H1 (cell line): ENCODE measurements at regions of chr19 and their contacts with region 1.

Region 1: GRCh38 chr19:34364830-34365462 is at the start of gene GPI:
- DNase-seq: peak; percentile 15 to 83
- H3K4me3 ChIP-seq: peak within 1 kb of the TSS; percentile 79 to 99 (median 88)
- H3K27ac ChIP-seq: 0 out of 2 replicates have a peak within 1 kb of the TSS, but pooled peaks have one; percentile 8
- H3K4me1 ChIP-seq: peaks cover 3 to 12% (median 6%) of the 10 kb centered on the region in 4 experiments; a peak in 6 of 7 replicates
- H3K27me3 ChIP-seq: no peaks in the 10 kb centered on the region
- CTCF ChIP-seq: no peak
- EP300 ChIP-seq: no peak
- POLR2A ChIP-seq: peak; percentile 46 to 72; a peak in 2 of 3 replicates
- RAD21 ChIP-seq: no peak
- total RNA-seq, gene GPI: 360 and 370 TPM in 2 replicates

Region 2: DNA sequence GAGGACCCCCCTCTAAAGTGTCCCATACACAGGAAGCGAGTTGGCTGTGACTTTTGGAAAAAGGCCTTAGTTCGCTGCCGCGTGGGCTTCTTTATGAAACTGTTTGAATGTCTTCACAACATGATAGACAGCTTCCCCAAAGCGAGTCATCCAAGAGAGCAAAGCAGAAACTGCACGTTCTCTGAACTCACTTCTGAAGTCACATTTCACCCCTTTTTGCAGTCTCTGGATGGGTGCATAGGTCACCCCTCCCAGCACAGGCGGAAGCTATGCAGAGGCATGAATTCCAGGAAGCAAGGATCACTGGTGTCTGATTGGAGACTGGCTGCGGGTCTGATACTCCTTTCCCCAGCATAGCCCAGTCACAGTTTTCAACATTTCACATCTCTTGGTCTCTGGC is 10.7 kb after region 1 on chr19:
- CTCF ChIA-PET with region 1: interaction called, 4 read pairs
- POLR2A ChIA-PET with region 1: interaction called, 18 read pairs
- DNase-seq: no peak
- H3K4me3 ChIP-seq: no peak overlapping the region
- H3K27ac ChIP-seq: no peak overlapping the region
- H3K4me1 ChIP-seq: no peaks in the 10 kb centered on the region
- H3K27me3 ChIP-seq: no peaks in the 10 kb centered on the region
- CTCF ChIP-seq: no peak
- EP300 ChIP-seq: no peak
- POLR2A ChIP-seq: no peak
- RAD21 ChIP-seq: no peak

Region 3: DNA sequence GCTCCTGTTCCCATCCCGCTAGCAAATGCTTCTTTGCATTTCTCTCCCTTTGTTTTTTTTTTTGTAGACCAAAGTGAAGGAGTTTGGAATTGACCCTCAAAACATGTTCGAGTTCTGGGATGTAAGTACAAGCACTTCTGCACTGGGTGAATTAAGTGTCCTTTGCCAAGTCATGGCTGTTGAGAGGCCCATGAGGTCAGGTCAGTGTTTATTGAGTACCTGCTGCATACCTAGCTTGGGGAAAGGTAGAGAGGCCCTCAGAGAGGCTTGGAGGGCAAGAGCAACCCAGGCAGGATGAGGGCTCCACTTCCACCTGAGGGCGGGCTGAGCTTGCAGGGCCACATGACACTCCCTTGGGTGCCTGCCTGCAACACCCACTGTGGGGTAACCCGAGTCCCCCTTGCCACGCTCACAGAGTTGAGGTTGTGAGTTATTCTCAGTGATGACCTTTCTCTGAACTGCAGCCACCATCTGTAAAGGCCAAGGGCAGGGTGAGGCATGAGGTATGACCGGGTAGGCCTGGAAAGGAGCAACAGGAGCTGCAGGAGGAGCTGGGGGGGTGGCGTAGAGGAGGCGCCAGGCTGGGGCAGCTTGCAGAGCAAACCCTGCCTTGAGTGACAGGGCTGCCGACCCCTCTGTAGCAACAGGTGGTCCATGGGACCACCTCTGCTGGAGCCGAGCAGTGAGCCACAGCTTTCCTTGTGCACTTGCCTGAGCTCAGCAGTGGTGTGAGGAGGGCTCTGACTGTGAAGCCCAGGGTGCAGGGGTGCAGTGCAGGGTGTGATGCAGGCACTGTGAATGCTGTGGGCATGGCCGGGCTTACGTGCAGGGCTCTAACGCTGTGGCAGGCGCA is 16.7 kb after region 1 on chr19:
- CTCF ChIA-PET with region 1: interaction called, 5 read pairs
- POLR2A ChIA-PET with region 1: interaction called, 18 read pairs
- DNase-seq: no peak
- H3K4me3 ChIP-seq: no peak overlapping the region
- H3K27ac ChIP-seq: no peak overlapping the region
- H3K4me1 ChIP-seq: no peaks in the 10 kb centered on the region
- H3K27me3 ChIP-seq: no peaks in the 10 kb centered on the region
- CTCF ChIP-seq: no peak
- EP300 ChIP-seq: no peak
- POLR2A ChIP-seq: no peak
- RAD21 ChIP-seq: no peak

Region 4: DNA sequence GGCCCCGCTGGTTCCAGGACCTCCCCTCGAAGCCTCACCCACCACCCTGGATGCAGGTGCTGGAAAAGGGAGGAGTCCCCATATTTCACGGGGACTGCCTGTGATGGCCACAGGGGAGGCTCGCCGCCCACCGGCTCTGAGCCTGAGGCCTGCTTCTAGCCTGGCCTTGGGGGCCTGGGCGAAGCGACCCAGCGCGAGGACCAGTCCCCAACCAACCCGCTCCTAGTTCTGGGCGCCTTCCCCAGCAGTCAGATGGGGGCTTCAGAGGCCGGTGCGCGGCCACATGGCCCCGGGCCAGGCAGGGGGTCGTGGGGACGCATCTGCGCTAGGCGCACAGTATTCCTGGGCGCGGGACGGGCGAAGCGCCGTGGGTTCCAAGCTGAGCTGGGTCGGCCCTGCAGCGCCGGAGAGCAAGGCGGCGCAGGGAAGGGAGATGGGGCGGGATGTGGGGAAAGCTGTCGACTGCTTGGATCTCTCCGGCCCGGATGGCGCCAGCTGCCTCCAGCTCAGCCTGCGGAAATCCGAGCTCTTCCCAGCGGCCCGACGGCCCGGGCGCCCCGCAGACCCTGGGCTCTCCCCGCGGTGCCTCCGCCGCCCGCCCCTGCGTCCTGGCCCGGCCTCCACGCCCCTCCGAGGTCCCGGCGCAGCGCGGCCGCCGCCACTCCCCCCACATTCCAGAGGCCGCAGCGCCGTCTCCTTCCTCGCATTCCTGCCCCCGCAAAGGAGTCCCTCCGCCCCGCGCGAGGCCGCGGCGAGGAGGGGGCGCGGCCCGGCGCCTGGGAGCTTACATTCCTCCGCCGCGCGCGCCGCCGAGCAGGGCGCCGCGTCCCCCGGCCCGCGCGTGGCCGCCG is 116.2 kb after region 1 on chr19 and contains the start of gene WTIP:
- CTCF ChIA-PET with region 1: no interaction called
- POLR2A ChIA-PET with region 1: interaction called, 10 read pairs
- DNase-seq: peak in 1 of 2 experiments; percentile 88
- H3K4me3 ChIP-seq: peak within 1 kb of the TSS; percentile 61 to 84 (median 71)
- H3K27ac ChIP-seq: 0 out of 2 replicates have a peak within 1 kb of the TSS, but pooled peaks have one; percentile 4
- H3K4me1 ChIP-seq: peaks cover 0 to 18% (median 13%) of the 10 kb centered on the region in 4 experiments; a peak in 6 of 7 replicates
- H3K27me3 ChIP-seq: peaks cover 0 to 23% (median 16%) of the 10 kb centered on the region in 4 experiments; a peak in 6 of 7 replicates
- CTCF ChIP-seq: no peak
- EP300 ChIP-seq: peak in 1 of 2 experiments; percentile 74; a peak in 1 of 3 replicates
- POLR2A ChIP-seq: peak; percentile 71 to 83
- RAD21 ChIP-seq: no peak
- total RNA-seq, gene WTIP: 15.4 and 20.3 TPM in 2 replicates